ENCODE measurements at regions of chr3 and their contacts with region 1.

Region 1: GRCh38 chr3:24185738-24186384 is 240.8 kb downstream of the NR1D2 start:
- DNase-seq: peak; percentile 81
- ATAC-seq: peak; percentile 91
- H3K4me3 ChIP-seq: no peak overlapping the region
- H3K27ac ChIP-seq: no peak overlapping the region
- H3K4me1 ChIP-seq: no peaks in the 10 kb centered on the region
- H3K27me3 ChIP-seq: no peaks in the 10 kb centered on the region
- CTCF ChIP-seq: peak; percentile 85

Region 2: GRCh38 chr3:24164967-24165602 is 20.8 kb before region 1 on chr3:
- CTCF ChIA-PET with region 1: no interaction called
- POLR2A ChIA-PET with region 1: no interaction called
- intact Hi-C with region 1: no loop called
- DNase-seq: no peak
- ATAC-seq: peak; percentile 18; the same call in 1 of the 2 replicates
- H3K4me3 ChIP-seq: no peak overlapping the region
- H3K27ac ChIP-seq: no peak overlapping the region
- H3K4me1 ChIP-seq: peaks cover 10% of the 10 kb centered on the region
- H3K27me3 ChIP-seq: no peaks in the 10 kb centered on the region
- CTCF ChIP-seq: no peak

Region 3: GRCh38 chr3:24237971-24238767 is 52.3 kb after region 1 on chr3:
- CTCF ChIA-PET with region 1: interaction called, 4 read pairs
- POLR2A ChIA-PET with region 1: no interaction called
- intact Hi-C with region 1: loop called (anchors 1 kb)
- DNase-seq: peak; percentile 92
- ATAC-seq: peak; percentile 68
- H3K4me3 ChIP-seq: no peak overlapping the region
- H3K27ac ChIP-seq: peak overlapping the region; percentile 86
- H3K4me1 ChIP-seq: peaks cover 60% of the 10 kb centered on the region
- H3K27me3 ChIP-seq: no peaks in the 10 kb centered on the region
- CTCF ChIP-seq: peak; percentile 76

Region 4: GRCh38 chr3:24640330-24640877 is 454.5 kb after region 1 on chr3:
- CTCF ChIA-PET with region 1: no interaction called
- POLR2A ChIA-PET with region 1: no interaction called
- intact Hi-C with region 1: loop called (anchors 2 kb)
- DNase-seq: peak; percentile 74
- ATAC-seq: peak; percentile 94
- H3K4me3 ChIP-seq: no peak overlapping the region
- H3K27ac ChIP-seq: no peak overlapping the region
- H3K4me1 ChIP-seq: peaks cover 16% of the 10 kb centered on the region
- H3K27me3 ChIP-seq: no peaks in the 10 kb centered on the region
- CTCF ChIP-seq: peak; percentile 95

Measured in PC-3 (cell line).